Activated CD4-positive, alpha-beta memory T cell treated with anti-CD3 and anti-CD28 coated beads for 36 hours (primary cell): ENCODE measurements at regions of chr19 and their contacts with region 1.

Region 1: DNA sequence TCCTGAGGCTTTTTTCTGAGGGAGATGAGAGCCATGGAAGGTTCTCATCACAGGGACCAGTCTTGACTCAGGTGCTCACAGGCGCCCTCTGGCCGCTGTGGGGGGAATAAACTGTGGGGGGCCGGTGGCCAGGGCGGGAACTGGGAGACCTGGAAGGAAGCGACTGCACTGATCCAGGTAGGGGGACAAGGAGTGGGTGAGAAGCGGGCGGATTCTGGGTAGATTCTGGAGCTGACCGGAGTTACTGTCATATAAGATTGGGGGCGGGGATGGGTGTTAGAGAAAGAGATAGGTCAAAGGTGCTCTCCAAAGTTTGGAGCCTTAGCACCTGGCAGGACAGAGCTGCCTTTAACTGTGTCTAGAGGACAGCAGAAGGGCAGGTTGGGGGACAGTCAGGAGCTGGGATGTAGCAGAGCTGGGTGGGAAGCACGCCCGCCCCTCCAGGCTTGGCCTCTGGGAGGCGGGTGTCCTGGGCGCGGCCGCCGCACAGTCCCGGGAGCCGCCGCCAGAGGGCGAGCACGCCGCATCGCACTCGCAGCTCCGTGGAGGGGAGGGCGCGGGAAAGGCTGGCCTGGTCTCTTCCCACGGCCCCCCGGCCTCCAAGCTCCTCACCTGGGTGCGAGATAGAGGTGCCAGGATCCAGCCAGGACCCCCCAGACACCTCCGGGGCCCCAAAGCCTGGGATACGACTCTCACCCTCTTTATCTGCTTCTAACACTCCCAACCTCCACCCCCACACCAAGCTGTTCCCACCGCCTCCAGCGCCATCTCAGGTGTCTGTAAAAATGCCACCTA is 4.2 kb upstream of the DAND5 start:
- DNase-seq: peak; percentile 91
- H3K4me3 Mint-ChIP-seq: peak overlapping the region; percentile 86
- H3K27ac Mint-ChIP-seq: peak overlapping the region; percentile 81
- H3K4me1 Mint-ChIP-seq: peaks cover 10% of the 10 kb centered on the region
- H3K27me3 Mint-ChIP-seq: no peaks in the 10 kb centered on the region

Region 2: DNA sequence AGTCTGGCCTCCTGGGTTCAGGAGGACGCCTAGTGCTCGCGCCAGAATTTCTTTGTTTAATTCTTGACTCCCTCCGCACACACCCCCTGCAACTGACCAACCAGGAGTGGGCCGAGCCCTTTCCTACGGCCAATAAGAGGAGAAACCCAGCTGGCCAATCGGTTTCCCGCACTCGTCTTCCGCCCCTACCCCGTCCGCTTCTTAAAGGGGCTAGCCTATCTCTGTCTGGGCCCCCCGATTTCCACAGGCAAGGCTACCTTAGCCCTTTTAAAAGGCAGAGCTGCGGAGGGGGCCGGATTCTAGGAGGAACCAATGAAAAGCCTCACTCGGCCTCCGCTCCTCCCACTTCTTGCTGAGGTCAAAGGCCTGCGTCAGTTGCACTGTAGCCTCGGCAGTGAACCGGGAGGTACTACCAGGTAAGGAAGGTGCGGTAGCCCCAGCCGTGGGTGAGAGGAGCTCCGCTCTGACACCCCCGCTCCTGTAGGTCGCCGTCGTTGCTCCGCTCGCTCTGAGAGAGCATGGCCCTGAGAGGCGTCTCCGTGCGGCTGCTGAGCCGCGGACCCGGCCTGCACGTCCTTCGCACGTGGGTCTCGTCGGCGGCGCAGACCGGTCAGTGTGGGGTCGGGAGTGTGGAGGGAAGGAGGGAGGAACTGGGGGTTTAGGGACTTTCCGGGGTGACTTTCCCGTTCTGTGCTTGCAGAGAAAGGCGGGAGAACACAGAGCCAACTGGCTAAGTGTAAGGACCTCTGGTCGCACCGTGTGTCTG is 74.2 kb before region 1 on chr19 and contains the start of gene GCDH:
- CTCF ChIA-PET with region 1: interaction called, 33 read pairs
- POLR2A ChIA-PET with region 1: no interaction called
- intact Hi-C with region 1: no loop called
- DNase-seq: peak; percentile 98
- H3K4me3 Mint-ChIP-seq: peak within 1 kb of the TSS; percentile 99
- H3K27ac Mint-ChIP-seq: peak within 1 kb of the TSS; percentile 81
- H3K4me1 Mint-ChIP-seq: peaks cover 29% of the 10 kb centered on the region
- H3K27me3 Mint-ChIP-seq: no peaks in the 10 kb centered on the region
- total RNA-seq, gene GCDH: 33.6 to 34.4 TPM

Region 3: GRCh38 chr19:12938234-12939025 is 26.8 kb before region 1 on chr19 and contains the start of gene CALR:
- CTCF ChIA-PET with region 1: interaction called, 21 read pairs
- POLR2A ChIA-PET with region 1: interaction called, 5 read pairs
- intact Hi-C with region 1: loop called (anchors 2 kb)
- DNase-seq: peak; percentile 99
- H3K4me3 Mint-ChIP-seq: peak within 1 kb of the TSS; percentile 98
- H3K27ac Mint-ChIP-seq: peak within 1 kb of the TSS; percentile 95
- H3K4me1 Mint-ChIP-seq: peaks cover 53% of the 10 kb centered on the region
- H3K27me3 Mint-ChIP-seq: no peaks in the 10 kb centered on the region
- total RNA-seq, gene CALR: 625 to 642 TPM

Region 4: DNA sequence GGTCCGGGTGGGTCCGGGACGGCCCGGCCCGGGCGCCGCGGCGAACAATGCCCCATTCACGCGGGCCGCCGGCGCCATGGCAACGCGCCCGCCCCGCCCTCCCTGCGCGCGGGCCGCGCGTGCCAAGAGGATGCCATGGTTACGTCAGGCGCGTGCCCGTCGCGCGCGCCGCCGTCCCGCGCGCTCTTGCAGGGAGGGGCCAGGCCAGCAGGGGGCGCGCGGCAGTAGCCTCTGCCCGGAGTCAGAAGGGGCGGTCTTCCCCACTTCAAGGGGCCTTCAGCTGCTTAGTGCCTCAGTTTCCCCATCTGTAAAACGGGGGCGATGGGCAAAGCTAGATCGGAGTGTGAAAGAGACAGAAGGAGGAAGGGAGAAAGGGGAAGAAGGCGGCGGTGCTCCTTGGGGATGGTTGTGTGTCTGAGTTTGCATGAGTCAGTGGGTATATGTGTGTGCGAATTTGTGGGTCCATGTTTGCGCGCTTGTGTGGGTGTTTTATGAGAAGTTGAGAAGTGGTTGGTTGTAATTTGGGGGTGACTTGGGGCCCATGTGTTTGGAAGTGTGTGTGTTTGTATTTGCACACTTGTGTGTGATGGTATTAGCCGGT is 18.4 kb after region 1 on chr19:
- CTCF ChIA-PET with region 1: interaction called, 104 read pairs
- POLR2A ChIA-PET with region 1: no interaction called
- intact Hi-C with region 1: no loop called
- DNase-seq: peak; percentile 88
- H3K4me3 Mint-ChIP-seq: no peak overlapping the region
- H3K27ac Mint-ChIP-seq: no peak overlapping the region
- H3K4me1 Mint-ChIP-seq: no peaks in the 10 kb centered on the region
- H3K27me3 Mint-ChIP-seq: no peaks in the 10 kb centered on the region

Region 5: GRCh38 chr19:13060964-13061927 is 96.0 kb after region 1 on chr19:
- CTCF ChIA-PET with region 1: interaction called, 72 read pairs
- POLR2A ChIA-PET with region 1: no interaction called
- intact Hi-C with region 1: no loop called
- DNase-seq: peak; percentile 85
- H3K4me3 Mint-ChIP-seq: peak overlapping the region; percentile 70
- H3K27ac Mint-ChIP-seq: no peak overlapping the region
- H3K4me1 Mint-ChIP-seq: peaks cover 8% of the 10 kb centered on the region
- H3K27me3 Mint-ChIP-seq: peaks cover 10% of the 10 kb centered on the region

Region 6: DNA sequence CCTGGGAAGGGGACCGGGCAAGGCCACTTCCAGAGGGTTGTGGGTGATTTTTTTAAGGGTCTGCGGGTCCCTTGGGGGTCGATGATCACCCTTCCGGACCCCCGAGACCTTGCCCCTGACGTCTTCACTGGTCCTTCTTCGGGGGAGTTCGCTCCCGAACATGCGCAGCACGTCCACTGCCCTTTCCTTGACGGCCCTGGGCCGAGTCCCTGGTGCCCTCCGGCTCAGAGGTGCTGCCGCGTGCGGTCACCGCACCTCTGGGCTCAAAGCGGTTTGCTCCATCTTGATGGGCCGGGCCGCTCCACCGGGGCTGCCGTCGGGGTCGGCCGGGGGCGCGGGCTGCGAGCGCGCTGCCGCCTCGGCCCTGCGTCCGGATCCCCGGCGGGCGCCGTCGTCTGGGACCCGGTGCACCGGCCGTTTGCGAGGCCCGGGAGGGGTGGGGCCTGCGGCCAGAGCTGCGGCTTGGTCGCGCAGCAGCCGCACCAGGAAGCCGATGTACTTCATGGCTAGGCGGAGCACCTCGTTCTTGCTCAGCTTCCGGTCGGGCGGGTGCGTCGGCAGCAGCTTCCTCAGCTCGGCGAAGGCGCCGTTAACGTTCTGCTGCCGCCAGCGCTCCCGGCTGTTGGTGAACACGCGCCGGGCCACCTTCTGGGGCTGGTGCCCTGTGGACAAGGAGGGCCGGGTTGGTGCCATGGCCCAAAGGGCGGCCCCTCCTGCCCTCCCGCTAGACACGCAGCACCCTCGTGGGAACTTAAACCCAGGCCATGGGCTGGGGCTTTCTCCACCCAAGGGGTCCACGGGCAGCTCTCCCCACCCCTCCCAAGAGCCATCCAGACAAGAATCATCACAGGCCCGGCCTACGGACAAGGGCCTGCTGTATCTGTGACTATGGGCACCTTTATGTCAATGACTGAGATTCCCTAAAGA is 134.1 kb after region 1 on chr19:
- CTCF ChIA-PET with region 1: interaction called, 107 read pairs
- POLR2A ChIA-PET with region 1: no interaction called
- intact Hi-C with region 1: no loop called
- DNase-seq: peak; percentile 88
- H3K4me3 Mint-ChIP-seq: peak overlapping the region; percentile 64
- H3K27ac Mint-ChIP-seq: peak overlapping the region; percentile 90
- H3K4me1 Mint-ChIP-seq: peaks cover 58% of the 10 kb centered on the region
- H3K27me3 Mint-ChIP-seq: peaks cover 22% of the 10 kb centered on the region

Region 7: GRCh38 chr19:13138171-13138915 is 173.1 kb after region 1 on chr19:
- CTCF ChIA-PET with region 1: no interaction called
- POLR2A ChIA-PET with region 1: no interaction called
- intact Hi-C with region 1: no loop called
- DNase-seq: no peak
- H3K4me3 Mint-ChIP-seq: no peak overlapping the region
- H3K27ac Mint-ChIP-seq: no peak overlapping the region
- H3K4me1 Mint-ChIP-seq: peaks cover 10% of the 10 kb centered on the region
- H3K27me3 Mint-ChIP-seq: no peaks in the 10 kb centered on the region

Region 8: DNA sequence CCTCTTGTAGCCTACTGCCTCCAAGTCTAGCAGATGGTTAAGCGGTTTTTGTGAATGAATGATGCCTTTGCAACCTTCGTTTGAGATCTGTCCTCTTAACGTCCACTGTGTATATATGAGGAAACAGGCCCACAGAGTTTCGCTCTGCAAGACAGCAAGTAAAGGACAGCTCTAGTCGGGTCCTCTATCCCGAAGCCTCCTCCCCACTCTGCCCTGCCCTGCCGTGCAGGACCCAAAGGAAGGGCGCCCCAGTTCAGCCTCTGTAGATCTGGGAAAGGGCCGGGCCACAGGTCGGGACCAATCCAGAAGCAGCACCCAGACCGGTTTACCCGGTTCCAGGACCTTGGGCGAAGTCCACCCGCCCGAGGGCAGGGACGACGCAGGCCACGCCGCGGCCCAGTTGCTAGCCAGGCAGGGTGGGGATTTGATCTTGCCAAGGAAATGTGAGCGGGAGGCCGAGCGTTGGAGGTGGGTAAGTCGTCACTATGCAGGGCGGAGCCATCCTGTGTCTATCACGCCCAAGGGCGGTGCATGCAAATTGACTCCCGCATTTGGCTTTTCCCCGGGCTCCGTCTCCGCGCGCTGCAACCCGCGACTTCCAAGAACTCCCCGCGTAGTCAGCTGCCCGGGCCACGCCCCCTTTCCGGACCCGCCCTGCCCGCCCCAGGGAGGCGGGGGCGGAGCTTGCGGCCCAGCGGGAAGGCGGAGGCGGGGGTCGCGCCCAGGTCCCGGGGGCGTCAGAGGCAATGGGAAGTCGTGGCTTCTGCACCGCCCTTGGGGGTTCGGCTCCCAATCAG is 197.5 kb after region 1 on chr19:
- CTCF ChIA-PET with region 1: interaction called, 10 read pairs
- POLR2A ChIA-PET with region 1: no interaction called
- intact Hi-C with region 1: no loop called
- DNase-seq: peak; percentile 96
- H3K4me3 Mint-ChIP-seq: peak overlapping the region; percentile 87
- H3K27ac Mint-ChIP-seq: peak overlapping the region; percentile 99
- H3K4me1 Mint-ChIP-seq: peaks cover 60% of the 10 kb centered on the region
- H3K27me3 Mint-ChIP-seq: no peaks in the 10 kb centered on the region